ENCODE measurements at regions of chr4 and their contacts with region 1.

Region 1: GRCh38 chr4:76993787-76994641 is 44.5 kb downstream of the SEPTIN11 start:
- DNase-seq: no peak
- H3K4me3 ChIP-seq: no peak overlapping the region
- H3K27ac ChIP-seq: no peak overlapping the region
- H3K4me1 ChIP-seq: no peaks in the 10 kb centered on the region
- H3K27me3 ChIP-seq: no peaks in the 10 kb centered on the region
- CTCF ChIP-seq: no peak

Region 2: GRCh38 chr4:76634239-76634638 is 359.8 kb before region 1 on chr4:
- CTCF ChIA-PET with region 1: interaction called, 12 read pairs
- POLR2A ChIA-PET with region 1: no interaction called
- intact Hi-C with region 1: no loop called
- DNase-seq: peak; percentile 37
- H3K4me3 ChIP-seq: no peak overlapping the region
- H3K27ac ChIP-seq: no peak overlapping the region
- H3K4me1 ChIP-seq: peaks cover 15% of the 10 kb centered on the region
- H3K27me3 ChIP-seq: no peaks in the 10 kb centered on the region
- CTCF ChIP-seq: no peak

Region 3: GRCh38 chr4:76696109-76696508 is 297.9 kb before region 1 on chr4:
- CTCF ChIA-PET with region 1: no interaction called
- POLR2A ChIA-PET with region 1: no interaction called
- intact Hi-C with region 1: no loop called
- DNase-seq: no peak
- H3K4me3 ChIP-seq: no peak overlapping the region
- H3K27ac ChIP-seq: no peak overlapping the region
- H3K4me1 ChIP-seq: no peaks in the 10 kb centered on the region
- H3K27me3 ChIP-seq: no peaks in the 10 kb centered on the region
- CTCF ChIP-seq: no peak

Measured in A673 (cell line).